ENCODE measurements at regions of chr18 and their contacts with region 1.

Region 1: GRCh38 chr18:47260120-47260923 is 8.9 kb upstream of the SKOR2 start:
- DNase-seq: no peak
- H3K4me3 ChIP-seq: no peak overlapping the region
- H3K27ac ChIP-seq: no peak overlapping the region
- H3K27me3 ChIP-seq: peaks cover 13 to 100% (median 98%) of the 10 kb centered on the region in 45 donors
- CTCF ChIP-seq: peak in 1 of 56 donors; percentile 7

Region 2: GRCh38 chr18:47323158-47323557 is 62.8 kb after region 1 on chr18:
- intact Hi-C with region 1: loop called in 1 of 2 experiments (anchors 10 kb)
- DNase-seq: no peak
- H3K4me3 ChIP-seq: no peak overlapping the region
- H3K27ac ChIP-seq: no peak overlapping the region
- H3K27me3 ChIP-seq: peaks cover 0 to 10% (median 0%) of the 10 kb centered on the region in 45 donors
- CTCF ChIP-seq: no peak

Measured in dorsolateral prefrontal cortex (tissue), 120 donors.